ENCODE measurements at regions of chr2 and their contacts with region 1.

Region 1: GRCh38 chr2:46067851-46068305 is 229.3 kb upstream of the EPAS1 start:
- DNase-seq: no peak
- H3K4me3 Mint-ChIP-seq: peak overlapping the region; percentile 6
- H3K27ac Mint-ChIP-seq: peak overlapping the region; percentile 65
- H3K4me1 Mint-ChIP-seq: peaks cover 47% of the 10 kb centered on the region
- H3K27me3 Mint-ChIP-seq: no peaks in the 10 kb centered on the region

Region 2: DNA sequence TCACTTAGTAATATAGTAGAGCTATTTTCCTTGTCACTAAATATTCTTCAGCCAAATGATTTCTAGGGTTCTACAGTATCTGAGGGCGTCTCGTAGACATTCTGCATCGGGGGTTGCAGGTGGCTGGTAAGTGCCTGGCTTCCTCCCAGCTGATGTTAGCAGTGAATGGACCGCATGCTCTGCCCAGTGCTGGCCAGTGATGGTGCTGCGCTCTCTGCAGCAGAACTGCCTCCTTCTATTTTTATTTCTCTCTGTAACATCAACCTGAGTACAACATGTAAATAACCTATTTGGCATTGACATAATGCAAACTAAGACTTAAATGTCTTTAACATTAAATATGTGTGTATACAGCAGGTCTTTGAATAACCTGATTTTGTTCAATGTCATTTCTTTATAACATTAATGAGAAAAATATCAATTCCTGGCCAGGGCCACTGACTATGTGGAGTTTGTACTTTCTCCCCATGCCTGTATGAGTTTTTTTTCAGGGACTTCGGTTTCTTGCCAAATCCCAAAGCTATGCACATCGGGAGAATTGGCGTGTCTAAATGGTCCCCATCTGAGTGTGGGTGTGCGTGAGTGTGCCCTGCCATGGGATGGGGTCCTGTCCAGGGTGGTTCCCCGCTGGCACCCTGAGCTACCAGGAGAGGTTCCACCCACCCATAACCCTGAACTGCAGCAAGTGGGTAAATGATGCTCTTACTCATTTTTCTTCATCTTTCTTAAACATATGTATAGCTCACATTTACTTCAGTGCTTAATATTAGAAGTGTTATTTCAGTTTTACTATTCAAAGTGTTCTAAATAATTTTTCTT is 48.9 kb before region 1 on chr2:
- intact Hi-C with region 1: loop called (anchors 2 kb)
- DNase-seq: no peak
- H3K4me3 Mint-ChIP-seq: no peak overlapping the region
- H3K27ac Mint-ChIP-seq: peak overlapping the region; percentile 84
- H3K4me1 Mint-ChIP-seq: peaks cover 45% of the 10 kb centered on the region
- H3K27me3 Mint-ChIP-seq: no peaks in the 10 kb centered on the region

Region 3: GRCh38 chr2:46097714-46098480 is 30.0 kb after region 1 on chr2:
- intact Hi-C with region 1: loop called (anchors 1 kb)
- DNase-seq: no peak
- H3K4me3 Mint-ChIP-seq: no peak overlapping the region
- H3K27ac Mint-ChIP-seq: no peak overlapping the region
- H3K4me1 Mint-ChIP-seq: peaks cover 33% of the 10 kb centered on the region
- H3K27me3 Mint-ChIP-seq: no peaks in the 10 kb centered on the region

Region 4: DNA sequence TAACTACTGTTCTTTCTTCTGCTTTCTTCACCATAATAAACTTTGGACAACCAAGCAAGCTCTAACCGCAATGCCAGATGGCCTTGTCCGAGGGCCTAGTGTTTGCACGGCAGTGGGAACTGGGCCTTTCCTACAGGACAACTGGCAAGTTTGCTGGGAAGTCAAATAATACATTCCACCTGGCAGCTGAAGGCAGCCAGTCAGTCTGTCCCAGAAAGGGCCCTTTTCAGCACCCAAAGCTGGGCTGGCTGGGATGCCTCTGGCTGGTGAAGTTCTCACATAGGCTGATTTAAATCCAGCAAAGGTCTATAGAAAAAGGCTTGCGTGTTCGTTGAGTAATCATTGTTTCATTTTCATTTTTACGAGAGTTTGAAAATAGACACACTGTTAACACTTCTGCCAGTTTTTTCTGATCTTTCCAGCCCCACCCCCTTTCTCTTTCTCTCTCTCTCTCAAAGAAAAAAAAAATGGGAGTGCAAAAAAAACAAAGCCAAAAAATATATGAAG is 119.3 kb after region 1 on chr2:
- intact Hi-C with region 1: loop called (anchors 2 kb)
- DNase-seq: peak; percentile 26
- H3K4me3 Mint-ChIP-seq: peak overlapping the region; percentile 50
- H3K27ac Mint-ChIP-seq: peak overlapping the region; percentile 87
- H3K4me1 Mint-ChIP-seq: peaks cover 17% of the 10 kb centered on the region
- H3K27me3 Mint-ChIP-seq: no peaks in the 10 kb centered on the region

Region 5: GRCh38 chr2:46434851-46435273 is 367.0 kb after region 1 on chr2:
- intact Hi-C with region 1: loop called (anchors 5 kb)
- DNase-seq: no peak
- H3K4me3 Mint-ChIP-seq: peak overlapping the region; percentile 37
- H3K27ac Mint-ChIP-seq: peak overlapping the region; percentile 86
- H3K4me1 Mint-ChIP-seq: peaks cover 94% of the 10 kb centered on the region
- H3K27me3 Mint-ChIP-seq: no peaks in the 10 kb centered on the region